Activated CD4-positive, alpha-beta T cell treated with anti-CD3 and anti-CD28 coated beads for 36 hours (primary cell): ENCODE measurements at regions of chr10 and their contacts with region 1.

Region 1: DNA sequence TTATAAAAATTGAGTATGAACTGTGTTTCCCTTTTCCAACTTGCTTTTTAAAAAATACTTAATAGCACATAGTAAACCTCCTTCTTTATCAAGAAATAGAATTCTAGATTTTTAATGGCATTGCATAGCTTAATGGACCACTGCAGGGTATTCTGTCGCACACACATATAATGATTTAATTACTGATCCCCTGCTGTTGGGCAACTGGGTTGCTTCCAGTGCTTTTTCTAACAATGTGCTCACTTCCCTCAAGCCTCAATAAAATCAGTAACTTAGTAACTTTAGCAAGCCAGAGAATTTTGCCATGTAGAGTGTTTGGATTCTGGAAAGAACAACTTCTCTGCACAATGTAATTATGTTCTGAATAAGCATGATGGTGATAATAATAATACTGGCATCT is 49.1 kb upstream of the PDLIM1 start:
- DNase-seq: no peak
- ATAC-seq: no peak
- H3K4me3 Mint-ChIP-seq: no peak overlapping the region
- H3K27ac Mint-ChIP-seq: no peak overlapping the region
- H3K4me1 Mint-ChIP-seq: no peaks in the 10 kb centered on the region
- H3K27me3 Mint-ChIP-seq: no peaks in the 10 kb centered on the region

Region 2: GRCh38 chr10:94225589-94225988 is 1114.3 kb before region 1 on chr10:
- CTCF ChIA-PET with region 1: no interaction called
- POLR2A ChIA-PET with region 1: no interaction called
- intact Hi-C with region 1: no loop called
- DNase-seq: peak; percentile 10
- ATAC-seq: no peak
- H3K4me3 Mint-ChIP-seq: no peak overlapping the region
- H3K27ac Mint-ChIP-seq: no peak overlapping the region
- H3K4me1 Mint-ChIP-seq: no peaks in the 10 kb centered on the region
- H3K27me3 Mint-ChIP-seq: peaks cover 1% of the 10 kb centered on the region

Region 3: GRCh38 chr10:94533027-94533426 is 806.8 kb before region 1 on chr10:
- CTCF ChIA-PET with region 1: no interaction called
- POLR2A ChIA-PET with region 1: no interaction called
- intact Hi-C with region 1: no loop called
- DNase-seq: no peak
- ATAC-seq: no peak
- H3K4me3 Mint-ChIP-seq: no peak overlapping the region
- H3K27ac Mint-ChIP-seq: no peak overlapping the region
- H3K4me1 Mint-ChIP-seq: no peaks in the 10 kb centered on the region
- H3K27me3 Mint-ChIP-seq: peaks cover 14% of the 10 kb centered on the region

Region 4: DNA sequence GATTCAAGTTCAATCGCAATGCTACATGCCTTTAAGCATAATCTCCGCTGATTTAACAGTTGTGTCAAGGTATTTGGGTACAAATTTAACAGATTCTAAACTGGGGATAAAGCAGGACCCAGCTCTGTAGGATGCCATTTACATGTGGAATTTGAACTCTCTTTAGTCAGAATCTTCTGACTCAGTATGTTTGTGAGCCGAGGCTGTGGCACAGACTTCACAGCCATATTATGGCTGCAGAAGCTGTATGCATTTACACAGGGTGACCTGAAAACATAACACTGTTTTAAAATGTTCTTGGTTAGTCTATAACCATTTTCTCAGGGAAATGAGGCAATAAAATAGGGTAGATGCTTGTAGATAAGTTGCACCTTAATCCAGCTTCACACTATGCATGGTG is 57.8 kb before region 1 on chr10:
- CTCF ChIA-PET with region 1: no interaction called
- POLR2A ChIA-PET with region 1: interaction called, 13 read pairs
- intact Hi-C with region 1: no loop called
- DNase-seq: no peak
- ATAC-seq: no peak
- H3K4me3 Mint-ChIP-seq: no peak overlapping the region
- H3K27ac Mint-ChIP-seq: no peak overlapping the region
- H3K4me1 Mint-ChIP-seq: no peaks in the 10 kb centered on the region
- H3K27me3 Mint-ChIP-seq: peaks cover 5% of the 10 kb centered on the region